Activated CD8-positive, alpha-beta memory T cell treated with anti-CD3 and anti-CD28 coated beads, Interleukin-2, amount 10 ng/mL, durations not matched to agents 7 days and 5 days (primary cell): ENCODE measurements at regions of chr11 and their contacts with region 1.

Region 1: DNA sequence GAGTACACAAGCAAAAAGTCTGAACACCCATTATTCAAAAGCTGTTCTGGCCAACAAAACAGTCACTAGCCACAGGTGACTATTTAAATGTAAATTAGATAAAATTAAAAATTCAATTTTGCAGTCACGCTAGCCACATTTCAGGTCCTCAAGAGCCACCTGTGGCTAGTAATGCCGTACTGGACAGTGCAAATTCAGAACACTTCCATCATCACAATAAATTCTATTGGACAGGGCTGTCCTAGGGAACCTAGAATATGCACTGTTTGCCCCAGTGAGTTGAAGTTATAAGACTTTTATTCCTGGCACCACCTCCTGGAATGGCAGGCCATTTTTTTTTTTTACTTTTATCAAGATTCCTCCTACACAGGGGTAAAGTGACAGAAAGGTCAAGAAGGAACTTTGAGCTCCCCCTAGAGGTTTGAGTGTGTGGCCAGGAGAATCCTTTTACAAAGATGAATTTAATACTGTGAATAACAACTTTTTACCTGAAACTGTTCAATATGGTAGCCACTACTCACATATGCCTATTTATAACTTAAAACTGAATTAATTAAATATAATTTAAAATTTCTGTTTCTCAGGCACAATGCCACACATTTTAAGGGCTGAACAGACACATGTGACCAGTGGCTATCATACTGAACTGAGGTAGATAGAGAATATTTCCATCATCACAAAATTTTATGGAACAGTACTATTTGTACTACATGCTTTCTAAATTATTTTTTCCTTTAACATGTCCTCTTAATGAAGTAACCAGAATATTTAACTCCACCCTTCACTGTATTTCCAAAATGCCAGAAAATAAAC is 6.5 kb downstream of the MSANTD2 start:
- DNase-seq: no peak
- ATAC-seq: peak; percentile 57
- H3K4me3 Mint-ChIP-seq: no peak overlapping the region
- H3K27ac Mint-ChIP-seq: no peak overlapping the region
- H3K4me1 Mint-ChIP-seq: peaks cover 36% of the 10 kb centered on the region
- H3K27me3 Mint-ChIP-seq: no peaks in the 10 kb centered on the region

Region 2: DNA sequence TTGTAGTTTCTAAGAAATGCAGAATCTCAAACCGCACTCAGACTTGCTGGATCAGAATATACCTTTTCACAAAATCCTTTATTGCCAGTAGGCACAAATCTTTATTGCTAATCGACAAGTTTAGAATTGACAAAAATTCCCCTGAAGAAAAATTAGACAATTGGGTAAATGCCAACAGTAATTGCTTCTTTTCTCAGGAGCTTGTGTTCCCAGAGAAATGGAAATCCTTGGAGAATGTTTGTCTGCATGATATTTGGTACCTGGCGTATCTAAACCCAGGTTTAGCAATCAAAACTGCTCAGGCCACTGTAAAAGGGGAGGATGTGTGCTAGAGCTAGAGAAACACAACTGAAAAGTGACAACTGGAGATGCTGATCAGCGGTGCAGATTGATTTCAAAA is 537.6 kb before region 1 on chr11 and contains the start of gene OR8G5:
- CTCF ChIA-PET with region 1: no interaction called
- DNase-seq: no peak
- ATAC-seq: no peak
- H3K4me3 Mint-ChIP-seq: no peak within 1 kb of the TSS
- H3K27ac Mint-ChIP-seq: no peak within 1 kb of the TSS
- H3K4me1 Mint-ChIP-seq: no peaks in the 10 kb centered on the region
- H3K27me3 Mint-ChIP-seq: no peaks in the 10 kb centered on the region
- total RNA-seq, gene OR8G5: not detected

Region 3: GRCh38 chr11:124812876-124813275 is 19.2 kb after region 1 on chr11:
- CTCF ChIA-PET with region 1: interaction called, 17 read pairs
- DNase-seq: no peak
- ATAC-seq: no peak
- H3K4me3 Mint-ChIP-seq: no peak overlapping the region
- H3K27ac Mint-ChIP-seq: no peak overlapping the region
- H3K4me1 Mint-ChIP-seq: peaks cover 2% of the 10 kb centered on the region
- H3K27me3 Mint-ChIP-seq: peaks cover 60% of the 10 kb centered on the region